ENCODE measurements at regions of chr1 and their contacts with region 1.

Region 1: DNA sequence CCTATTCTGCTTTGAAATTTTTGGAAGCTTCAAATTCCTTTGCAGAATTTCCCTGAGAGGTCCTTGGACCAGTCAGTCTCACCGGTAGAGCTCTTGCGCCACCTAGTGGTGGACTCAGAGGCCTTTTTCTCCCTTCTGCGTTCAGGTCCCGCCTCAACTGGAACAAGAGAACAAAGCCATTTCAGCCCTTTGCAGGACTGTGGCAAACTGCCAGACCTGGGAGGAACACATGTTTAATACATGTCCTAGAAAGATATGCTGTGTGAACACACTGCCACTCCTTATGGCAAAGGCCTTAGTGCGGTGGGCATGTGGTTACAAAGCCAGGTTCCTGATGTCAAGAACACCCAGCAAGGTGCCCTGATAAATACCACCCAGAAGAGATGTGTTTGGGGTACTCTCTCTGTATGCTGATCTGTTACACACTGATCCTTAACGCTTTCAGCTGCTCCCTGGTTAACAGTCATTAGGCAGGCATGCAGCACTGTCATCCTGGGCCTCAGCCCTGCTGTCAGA is 82.2 kb upstream of the SSX2IP start:
- DNase-seq: peak; percentile 71 to 78
- ATAC-seq: peak; percentile 75 to 91 (median 86)
- H3K4me3 ChIP-seq: no peak overlapping the region
- H3K27ac ChIP-seq: no peak overlapping the region
- H3K4me1 ChIP-seq: no peaks in the 10 kb centered on the region
- H3K27me3 ChIP-seq: no peaks in the 10 kb centered on the region
- CTCF ChIP-seq: peak; percentile 86 to 97 (median 93)

Region 2: GRCh38 chr1:83905315-83905907 is 867.1 kb before region 1 on chr1:
- intact Hi-C with region 1: loop called in 1 of 10 experiments (anchors 10 kb)
- DNase-seq: no peak
- ATAC-seq: no peak
- H3K4me3 ChIP-seq: no peak overlapping the region
- H3K27ac ChIP-seq: no peak overlapping the region
- H3K4me1 ChIP-seq: peaks cover 0 to under 1% (median 0%) of the 10 kb centered on the region in 9 donors
- H3K27me3 ChIP-seq: no peaks in the 10 kb centered on the region
- CTCF ChIP-seq: peak; percentile 28 to 80 (median 69)

Region 3: DNA sequence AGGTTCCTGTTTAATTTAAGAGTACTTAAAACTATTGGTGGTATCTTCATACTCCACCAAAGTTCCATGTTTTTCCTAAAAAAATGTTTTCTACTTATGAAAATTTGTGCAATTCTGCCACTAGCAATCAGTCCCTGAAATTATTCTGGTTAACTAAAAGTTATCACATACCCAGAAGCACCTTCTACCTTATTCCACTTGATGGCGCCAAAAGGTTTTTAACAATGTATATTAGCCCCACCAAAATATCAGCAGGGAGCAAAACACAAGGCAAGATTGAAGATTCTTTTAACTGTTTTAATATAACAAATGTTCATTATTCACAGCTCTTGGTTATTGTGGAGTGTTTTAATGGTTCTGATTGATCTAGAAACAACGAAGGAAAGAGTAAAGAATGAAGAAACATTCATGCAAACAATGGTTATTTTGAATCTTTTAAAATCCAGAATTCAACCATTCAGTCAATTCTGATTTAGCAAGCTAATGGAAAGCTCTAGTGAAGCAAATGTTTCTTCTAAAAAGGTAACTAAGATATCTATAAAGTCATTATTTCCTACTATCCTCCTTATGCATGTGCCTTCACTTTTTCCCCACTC is 840.7 kb before region 1 on chr1:
- intact Hi-C with region 1: loop called in 2 of 10 experiments (anchors 10 kb)
- DNase-seq: peak in 1 of 2 donors; percentile 23
- ATAC-seq: peak in 7 of 8 donors; percentile 51 to 84 (median 71)
- H3K4me3 ChIP-seq: no peak overlapping the region
- H3K27ac ChIP-seq: no peak overlapping the region
- H3K4me1 ChIP-seq: no peaks in the 10 kb centered on the region
- H3K27me3 ChIP-seq: no peaks in the 10 kb centered on the region
- CTCF ChIP-seq: peak in 8 of 9 donors; percentile 59 to 82 (median 73)

Region 4: DNA sequence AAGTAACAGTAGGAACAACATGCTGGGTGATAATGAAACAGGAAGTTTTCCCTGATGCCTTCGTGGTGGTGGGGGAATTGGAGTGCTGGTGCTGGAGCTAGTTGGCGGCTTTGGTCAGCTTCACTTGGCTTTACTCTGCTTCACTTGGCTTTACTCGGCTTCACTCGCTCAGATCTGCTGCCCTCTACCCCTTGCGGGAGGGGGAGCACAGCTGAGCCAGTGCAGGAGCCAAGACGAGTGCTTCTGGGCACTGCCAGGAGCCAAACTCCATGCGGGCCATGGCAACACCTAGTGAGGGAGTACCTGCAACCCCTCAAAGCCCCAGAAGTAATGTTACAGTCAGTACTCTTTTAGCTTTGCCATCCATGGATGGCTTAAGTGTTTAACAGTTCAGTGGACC is 639.0 kb before region 1 on chr1:
- intact Hi-C with region 1: loop called in 1 of 10 experiments (anchors 10 kb)
- DNase-seq: no peak
- ATAC-seq: no peak
- H3K4me3 ChIP-seq: no peak overlapping the region
- H3K27ac ChIP-seq: no peak overlapping the region
- H3K4me1 ChIP-seq: no peaks in the 10 kb centered on the region
- H3K27me3 ChIP-seq: no peaks in the 10 kb centered on the region
- CTCF ChIP-seq: no peak

Region 5: GRCh38 chr1:84143796-84144565 is 628.5 kb before region 1 on chr1 and contains the start of gene PRKACB:
- intact Hi-C with region 1: loop called in 3 of 10 experiments (anchors 2 to 10 kb)
- DNase-seq: no peak
- ATAC-seq: peak in 5 of 8 donors; percentile 28 to 58 (median 50)
- H3K4me3 ChIP-seq: peak within 1 kb of the TSS in 5 of 10 donors; percentile 6 to 50 (median 13)
- H3K27ac ChIP-seq: peak within 1 kb of the TSS in 1 of 10 donors; percentile 78
- H3K4me1 ChIP-seq: peaks cover 0 to 29% (median 0%) of the 10 kb centered on the region in 9 donors
- H3K27me3 ChIP-seq: no peaks in the 10 kb centered on the region
- CTCF ChIP-seq: no peak
- total RNA-seq, gene PRKACB: 28.4 to 49.1 (median 43.0) TPM

Region 6: DNA sequence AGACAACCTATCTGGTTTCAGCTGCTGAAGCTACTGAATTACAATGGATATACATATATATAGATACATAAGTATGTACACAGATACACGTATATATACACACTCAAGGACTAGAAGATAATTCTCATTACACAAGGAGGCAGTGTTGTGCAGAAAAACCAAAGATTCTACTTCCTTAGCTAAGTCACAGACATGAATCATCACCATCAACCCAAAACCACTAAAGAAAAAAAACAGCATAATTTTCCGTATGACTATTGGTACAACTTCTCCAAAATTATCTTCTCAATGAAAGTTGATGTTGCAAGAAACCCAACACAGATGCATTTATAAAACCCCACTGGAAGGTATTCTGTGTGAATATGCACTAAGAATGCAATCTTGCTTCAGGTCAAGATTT is 330.2 kb before region 1 on chr1:
- intact Hi-C with region 1: loop called in 3 of 10 experiments (anchors 2 to 10 kb)
- DNase-seq: peak in 1 of 2 donors; percentile 13
- ATAC-seq: peak in 7 of 8 donors; percentile 58 to 89 (median 83)
- H3K4me3 ChIP-seq: no peak overlapping the region
- H3K27ac ChIP-seq: peak overlapping the region in 1 of 10 donors; percentile 31
- H3K4me1 ChIP-seq: peaks cover 0 to 24% (median 1%) of the 10 kb centered on the region in 9 donors
- H3K27me3 ChIP-seq: peaks cover 0 to 9% (median 0%) of the 10 kb centered on the region in 7 donors
- CTCF ChIP-seq: peak in 8 of 9 donors; percentile 18 to 67 (median 54)

Region 7: GRCh38 chr1:84936116-84936810 is 163.8 kb after region 1 on chr1:
- intact Hi-C with region 1: loop called in 8 of 10 experiments (anchors 1 to 10 kb)
- DNase-seq: peak in 1 of 2 donors; percentile 29
- ATAC-seq: peak in 7 of 8 donors; percentile 68 to 81 (median 72)
- H3K4me3 ChIP-seq: no peak overlapping the region
- H3K27ac ChIP-seq: no peak overlapping the region
- H3K4me1 ChIP-seq: peaks cover 0 to 4% (median 0%) of the 10 kb centered on the region in 9 donors
- H3K27me3 ChIP-seq: peaks cover 0 to 4% (median 0%) of the 10 kb centered on the region in 7 donors
- CTCF ChIP-seq: peak; percentile 75 to 96 (median 91)